ENCODE measurements at regions of chr6 and their contacts with region 1.

Region 1: DNA sequence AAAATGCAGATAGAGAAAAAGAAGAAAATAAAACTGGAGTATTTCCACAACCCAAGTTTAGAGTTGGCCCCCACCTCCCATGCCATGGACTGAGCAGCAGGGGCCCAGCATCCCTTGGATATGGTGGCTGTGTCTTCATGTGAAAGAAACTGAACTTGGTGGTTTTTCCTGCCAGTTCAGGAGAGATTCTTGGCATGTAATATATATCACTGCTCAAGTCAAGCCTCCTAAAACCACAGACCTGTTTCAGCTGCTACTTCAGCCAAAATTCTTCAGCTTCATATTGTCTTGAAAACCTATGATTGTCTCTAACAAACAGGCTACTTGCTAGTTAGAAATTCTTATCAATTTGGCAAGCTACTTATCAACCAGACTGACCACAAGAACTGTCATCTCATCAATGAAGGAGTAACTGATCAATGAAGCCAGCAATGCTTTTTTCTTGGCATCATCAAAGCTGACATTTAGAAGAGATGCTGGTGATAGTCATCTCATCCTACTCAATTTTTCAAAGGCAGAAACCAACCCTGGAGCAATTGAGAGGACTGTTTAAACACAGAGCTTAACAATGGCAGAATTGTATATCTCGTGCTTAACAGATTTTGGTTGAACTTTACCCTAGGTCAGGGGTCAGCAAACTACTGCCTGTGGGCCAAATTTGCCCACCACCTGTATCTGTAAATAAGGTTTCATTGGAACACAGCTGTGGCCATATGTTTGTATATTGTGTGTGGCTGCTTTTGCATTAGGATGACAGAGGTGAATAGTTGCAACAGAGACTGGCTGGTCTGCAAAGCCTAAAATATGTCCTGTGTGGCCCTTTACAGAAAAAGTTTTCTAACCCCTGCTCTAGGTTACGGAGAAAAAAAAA is 10.4 kb upstream of the NOL7 start:
- DNase-seq: no peak
- CTCF ChIP-seq: no peak

Region 2: GRCh38 chr6:13614926-13615798 is 10.4 kb after region 1 on chr6 and contains the start of gene NOL7:
- CTCF ChIA-PET with region 1: interaction called, 21 read pairs
- POLR2A ChIA-PET with region 1: no interaction called
- DNase-seq: peak; percentile 98
- CTCF ChIP-seq: peak; percentile 92

Region 3: DNA sequence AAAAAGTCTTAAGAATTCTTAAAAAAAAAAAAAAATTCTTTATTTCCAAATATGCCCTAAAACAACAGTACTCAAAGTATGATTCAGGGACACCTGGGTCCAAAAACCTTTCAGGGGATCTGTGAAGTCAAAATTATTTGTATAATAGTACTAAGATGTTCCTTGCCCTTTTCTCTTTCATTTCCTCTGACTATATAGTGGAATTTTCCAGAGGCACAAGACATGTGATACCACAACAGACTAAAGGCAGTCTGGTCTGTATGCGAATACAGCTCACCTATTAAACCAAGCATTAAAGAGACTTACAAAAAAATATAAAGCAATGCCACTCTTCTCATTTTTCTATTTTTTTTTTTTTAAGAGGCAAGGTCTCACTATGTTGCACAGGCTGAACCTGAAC is 25.7 kb after region 1 on chr6:
- CTCF ChIA-PET with region 1: no interaction called
- POLR2A ChIA-PET with region 1: no interaction called
- DNase-seq: no peak
- CTCF ChIP-seq: no peak